B cell (primary cell): ENCODE measurements at regions of chr17 and their contacts with region 1.

Region 1: DNA sequence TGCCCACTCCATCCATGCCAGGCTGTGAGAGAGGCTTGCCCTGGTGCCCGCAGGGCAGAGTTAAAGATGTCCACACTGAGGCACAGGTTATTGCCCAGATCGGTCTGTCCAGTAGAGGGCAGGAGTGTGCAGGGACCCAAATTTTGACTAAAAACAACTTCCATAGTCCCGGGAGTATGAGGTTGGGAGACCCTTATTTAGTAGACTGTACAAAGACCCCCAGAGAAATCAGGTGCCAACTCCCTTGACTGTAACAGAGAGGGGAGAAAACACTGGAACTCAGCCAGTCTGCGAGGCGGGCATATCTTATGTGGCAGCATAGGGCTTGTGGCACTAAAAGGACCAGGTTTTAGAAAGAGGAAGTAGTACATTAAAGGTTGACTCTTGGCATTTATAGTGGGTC is 43.4 kb downstream of the HNF1B start:
- DNase-seq: peak; percentile 76
- ATAC-seq: peak; percentile 91
- H3K4me3 ChIP-seq: peak overlapping the region; percentile 14 to 45 (median 25)
- H3K4me3 Mint-ChIP-seq: peak overlapping the region; percentile 67
- H3K27ac ChIP-seq: no peak overlapping the region
- H3K27ac Mint-ChIP-seq: peak overlapping the region; percentile 28
- H3K4me1 ChIP-seq: peaks cover 0 to 6% of the 10 kb centered on the region in 2 donors
- H3K4me1 Mint-ChIP-seq: peaks cover 7% of the 10 kb centered on the region
- H3K27me3 ChIP-seq: peaks cover 0 to 6% (median 0%) of the 10 kb centered on the region in 4 experiments
- H3K27me3 Mint-ChIP-seq: peaks cover 29% of the 10 kb centered on the region
- CTCF ChIP-seq: peak; percentile 89

Region 2: GRCh38 chr17:37744961-37745800 is 43.7 kb after region 1 on chr17 and contains the start of gene HNF1B:
- CTCF ChIA-PET with region 1: interaction called, 6 read pairs
- POLR2A ChIA-PET with region 1: no interaction called
- intact Hi-C with region 1: loop called (anchors 5 kb)
- DNase-seq: peak; percentile 90
- ATAC-seq: peak; percentile 81
- H3K4me3 ChIP-seq: peak within 1 kb of the TSS; percentile 13 to 46 (median 41)
- H3K4me3 Mint-ChIP-seq: peak within 1 kb of the TSS; percentile 84
- H3K27ac ChIP-seq: no peak within 1 kb of the TSS
- H3K27ac Mint-ChIP-seq: peak within 1 kb of the TSS; percentile 73
- H3K4me1 ChIP-seq: peaks cover 51 to 62% of the 10 kb centered on the region in 2 donors
- H3K4me1 Mint-ChIP-seq: peaks cover 42% of the 10 kb centered on the region
- H3K27me3 ChIP-seq: peaks cover 0 to 84% (median 61%) of the 10 kb centered on the region in 4 experiments
- H3K27me3 Mint-ChIP-seq: peaks cover 56% of the 10 kb centered on the region
- CTCF ChIP-seq: no peak
- total RNA-seq, gene HNF1B: 1.5 and 1.6 TPM in 2 replicates

Region 3: DNA sequence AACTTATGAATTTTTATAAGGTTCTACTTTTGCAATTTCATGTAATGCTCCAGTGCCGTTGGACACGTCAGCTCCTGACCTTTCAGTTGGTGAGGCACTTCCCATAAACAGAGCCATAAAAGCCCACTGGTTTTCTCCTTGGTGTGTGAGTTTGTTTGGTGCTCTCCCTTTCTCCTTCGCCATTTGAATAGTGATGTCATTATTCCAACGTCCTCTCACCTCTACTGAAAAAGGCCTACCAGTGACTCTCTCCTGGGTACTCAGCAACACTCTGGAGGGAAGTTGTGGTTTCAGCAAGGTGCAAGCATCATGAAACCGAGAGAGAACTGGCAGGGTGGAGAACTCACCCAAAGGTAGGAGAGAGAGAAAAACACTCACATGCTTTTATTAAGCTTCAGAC is 73.0 kb after region 1 on chr17:
- CTCF ChIA-PET with region 1: interaction called, 11 read pairs
- POLR2A ChIA-PET with region 1: no interaction called
- intact Hi-C with region 1: no loop called
- DNase-seq: peak; percentile 79
- ATAC-seq: peak; percentile 94
- H3K4me3 ChIP-seq: no peak overlapping the region
- H3K4me3 Mint-ChIP-seq: peak overlapping the region; percentile 46
- H3K27ac ChIP-seq: peak overlapping the region; percentile 33 to 35
- H3K27ac Mint-ChIP-seq: peak overlapping the region; percentile 59
- H3K4me1 ChIP-seq: peaks cover 15 to 24% of the 10 kb centered on the region in 2 donors
- H3K4me1 Mint-ChIP-seq: peaks cover 40% of the 10 kb centered on the region
- H3K27me3 ChIP-seq: no peaks in the 10 kb centered on the region
- H3K27me3 Mint-ChIP-seq: no peaks in the 10 kb centered on the region
- CTCF ChIP-seq: no peak

Region 4: DNA sequence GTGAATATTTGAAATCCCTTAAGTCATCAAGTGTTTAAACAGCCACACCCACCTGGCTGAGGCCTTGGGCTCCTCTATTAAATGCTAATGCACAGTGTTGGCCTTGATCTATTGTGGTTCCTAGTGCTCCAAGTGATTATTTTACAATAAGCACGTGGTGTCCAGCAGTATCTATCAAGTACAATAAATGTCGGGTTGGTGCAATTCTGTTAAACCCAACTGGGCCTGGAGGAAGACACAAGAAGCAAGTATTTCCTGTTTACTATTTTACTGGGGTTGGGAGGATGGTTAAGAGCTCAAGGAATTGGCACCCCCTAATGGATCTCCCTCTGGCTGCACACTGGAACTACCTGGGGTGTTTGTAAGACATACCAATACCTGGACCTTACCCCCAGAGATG is 115.5 kb after region 1 on chr17:
- CTCF ChIA-PET with region 1: interaction called, 42 read pairs
- POLR2A ChIA-PET with region 1: no interaction called
- intact Hi-C with region 1: no loop called
- DNase-seq: no peak
- ATAC-seq: no peak
- H3K4me3 ChIP-seq: no peak overlapping the region
- H3K4me3 Mint-ChIP-seq: no peak overlapping the region
- H3K27ac ChIP-seq: no peak overlapping the region
- H3K27ac Mint-ChIP-seq: no peak overlapping the region
- H3K4me1 ChIP-seq: peaks cover 26 to 37% of the 10 kb centered on the region in 2 donors
- H3K4me1 Mint-ChIP-seq: peaks cover 28% of the 10 kb centered on the region
- H3K27me3 ChIP-seq: peaks cover 0 to 11% (median 8%) of the 10 kb centered on the region in 4 experiments
- H3K27me3 Mint-ChIP-seq: peaks cover 21% of the 10 kb centered on the region
- CTCF ChIP-seq: no peak

Region 5: GRCh38 chr17:37844158-37844976 is 142.9 kb after region 1 on chr17:
- CTCF ChIA-PET with region 1: interaction called, 9 read pairs
- POLR2A ChIA-PET with region 1: no interaction called
- intact Hi-C with region 1: loop called (anchors 1 kb)
- DNase-seq: peak; percentile 68
- ATAC-seq: peak; percentile 91
- H3K4me3 ChIP-seq: peak overlapping the region; percentile 19 to 75 (median 47)
- H3K4me3 Mint-ChIP-seq: peak overlapping the region; percentile 88
- H3K27ac ChIP-seq: peak overlapping the region; percentile 66 to 76
- H3K27ac Mint-ChIP-seq: peak overlapping the region; percentile 78
- H3K4me1 ChIP-seq: peaks cover 26 to 30% of the 10 kb centered on the region in 2 donors
- H3K4me1 Mint-ChIP-seq: peaks cover 47% of the 10 kb centered on the region
- H3K27me3 ChIP-seq: no peaks in the 10 kb centered on the region
- H3K27me3 Mint-ChIP-seq: no peaks in the 10 kb centered on the region
- CTCF ChIP-seq: peak; percentile 80